Activated CD4-positive, alpha-beta T cell treated with anti-CD3 and anti-CD28 coated beads for 36 hours (primary cell): ENCODE measurements at regions of chr12 and their contacts with region 1.

Region 1: GRCh38 chr12:12786716-12787601 is 1.5 kb downstream of the APOLD1 start:
- DNase-seq: peak; percentile 84
- ATAC-seq: peak; percentile 89
- H3K4me3 Mint-ChIP-seq: peak overlapping the region; percentile 81
- H3K27ac Mint-ChIP-seq: peak overlapping the region; percentile 90
- H3K4me1 Mint-ChIP-seq: peaks cover 28% of the 10 kb centered on the region
- H3K27me3 Mint-ChIP-seq: no peaks in the 10 kb centered on the region

Region 2: GRCh38 chr12:12736759-12737676 is 49.9 kb before region 1 on chr12:
- CTCF ChIA-PET with region 1: interaction called, 14 read pairs
- POLR2A ChIA-PET with region 1: no interaction called
- intact Hi-C with region 1: no loop called
- DNase-seq: peak; percentile 65
- ATAC-seq: peak; percentile 87
- H3K4me3 Mint-ChIP-seq: peak overlapping the region; percentile 32
- H3K27ac Mint-ChIP-seq: peak overlapping the region; percentile 75
- H3K4me1 Mint-ChIP-seq: peaks cover 35% of the 10 kb centered on the region
- H3K27me3 Mint-ChIP-seq: no peaks in the 10 kb centered on the region

Region 3: GRCh38 chr12:12803186-12803585 is 16.2 kb after region 1 on chr12:
- CTCF ChIA-PET with region 1: interaction called, 27 read pairs
- POLR2A ChIA-PET with region 1: no interaction called
- intact Hi-C with region 1: loop called in 1 of 2 experiments (anchors 1 kb)
- DNase-seq: peak; percentile 53
- ATAC-seq: peak; percentile 82
- H3K4me3 Mint-ChIP-seq: no peak overlapping the region
- H3K27ac Mint-ChIP-seq: peak overlapping the region; percentile 61
- H3K4me1 Mint-ChIP-seq: peaks cover 48% of the 10 kb centered on the region
- H3K27me3 Mint-ChIP-seq: no peaks in the 10 kb centered on the region

Region 4: GRCh38 chr12:12837025-12837872 is 50.3 kb after region 1 on chr12:
- CTCF ChIA-PET with region 1: interaction called, 9 read pairs
- POLR2A ChIA-PET with region 1: interaction called, 4 read pairs
- intact Hi-C with region 1: loop called (anchors 2 to 5 kb)
- DNase-seq: peak; percentile 76
- ATAC-seq: peak; percentile 95
- H3K4me3 Mint-ChIP-seq: no peak overlapping the region
- H3K27ac Mint-ChIP-seq: peak overlapping the region; percentile 77
- H3K4me1 Mint-ChIP-seq: peaks cover 44% of the 10 kb centered on the region
- H3K27me3 Mint-ChIP-seq: no peaks in the 10 kb centered on the region

Region 5: DNA sequence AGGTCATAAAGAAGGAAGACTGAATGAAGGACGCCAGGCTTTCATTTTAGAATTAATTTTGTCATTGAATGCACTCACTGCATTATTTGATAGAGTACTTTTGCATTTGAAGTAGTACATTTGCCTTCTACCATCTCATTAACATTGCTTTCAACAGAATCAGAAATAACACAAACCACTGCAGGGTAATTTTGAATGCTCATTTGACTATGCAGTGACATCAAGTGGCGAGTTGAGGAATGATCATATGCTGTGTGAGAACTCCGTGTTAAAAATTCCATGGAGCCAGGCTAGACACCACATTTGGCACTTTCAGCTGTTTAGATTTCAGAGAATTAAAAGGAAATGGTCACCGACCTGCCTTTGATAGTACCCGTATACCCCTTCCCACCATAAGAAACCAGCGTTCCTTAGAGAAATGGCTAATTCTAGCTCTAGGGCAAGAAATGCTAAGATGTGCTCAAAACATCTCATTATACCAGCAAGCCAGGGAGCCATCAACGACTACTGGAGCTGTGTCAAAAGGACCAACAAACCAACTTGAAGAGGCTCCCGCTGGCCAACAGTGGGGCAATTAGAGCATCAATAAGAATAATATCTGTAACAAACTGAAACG is 196.6 kb after region 1 on chr12:
- CTCF ChIA-PET with region 1: interaction called, 15 read pairs
- POLR2A ChIA-PET with region 1: no interaction called
- intact Hi-C with region 1: loop called (anchors 1 to 5 kb)
- DNase-seq: peak; percentile 16
- ATAC-seq: no peak
- H3K4me3 Mint-ChIP-seq: no peak overlapping the region
- H3K27ac Mint-ChIP-seq: no peak overlapping the region
- H3K4me1 Mint-ChIP-seq: no peaks in the 10 kb centered on the region
- H3K27me3 Mint-ChIP-seq: no peaks in the 10 kb centered on the region

Region 6: GRCh38 chr12:13094347-13094746 is 307.4 kb after region 1 on chr12:
- CTCF ChIA-PET with region 1: no interaction called
- POLR2A ChIA-PET with region 1: no interaction called
- intact Hi-C with region 1: loop called in 1 of 2 experiments (anchors 1 kb)
- DNase-seq: no peak
- ATAC-seq: no peak
- H3K4me3 Mint-ChIP-seq: no peak overlapping the region
- H3K27ac Mint-ChIP-seq: no peak overlapping the region
- H3K4me1 Mint-ChIP-seq: peaks cover 26% of the 10 kb centered on the region
- H3K27me3 Mint-ChIP-seq: no peaks in the 10 kb centered on the region

Region 7: DNA sequence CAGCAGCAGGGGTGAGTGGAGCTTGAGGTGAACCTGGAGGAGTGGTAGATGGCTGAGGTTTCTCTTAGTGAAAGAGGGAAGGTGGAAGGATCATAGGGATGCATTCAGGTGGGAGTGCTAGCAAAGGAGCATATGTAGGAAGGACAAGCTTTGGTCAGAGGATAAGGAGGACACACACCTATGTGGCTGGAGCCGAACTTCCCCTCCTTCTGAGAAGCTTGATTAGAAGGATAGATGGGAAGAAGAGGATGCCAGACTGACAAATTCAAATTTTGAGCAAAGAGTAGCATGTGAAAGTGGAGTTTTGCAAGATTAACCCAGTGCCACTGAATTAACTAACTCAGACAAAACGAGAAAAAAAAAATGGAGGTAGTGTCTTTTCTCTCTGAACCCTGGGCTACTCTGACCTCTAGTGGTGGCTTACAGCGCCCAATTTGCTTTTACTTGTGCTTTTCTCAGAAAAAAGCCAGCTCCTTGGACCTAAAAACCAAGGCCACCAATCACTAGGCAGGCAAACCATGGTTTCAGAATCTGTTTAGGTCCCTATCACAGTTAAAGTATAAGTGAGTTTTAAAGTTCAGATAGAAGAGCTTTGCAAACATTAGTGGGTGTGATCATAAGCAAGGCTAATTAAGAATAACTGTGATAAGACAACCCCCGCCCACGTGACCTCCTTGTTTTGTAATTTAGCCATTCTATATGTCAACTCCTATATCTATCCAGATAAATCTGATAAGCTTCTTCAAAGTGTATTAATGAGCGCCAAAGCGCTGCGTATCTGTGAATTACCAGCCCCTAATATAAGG is 425.1 kb after region 1 on chr12:
- CTCF ChIA-PET with region 1: interaction called, 3 read pairs
- POLR2A ChIA-PET with region 1: no interaction called
- intact Hi-C with region 1: loop called (anchors 5 kb)
- DNase-seq: peak; percentile 84
- ATAC-seq: peak; percentile 59
- H3K4me3 Mint-ChIP-seq: no peak overlapping the region
- H3K27ac Mint-ChIP-seq: peak overlapping the region; percentile 49
- H3K4me1 Mint-ChIP-seq: peaks cover 29% of the 10 kb centered on the region
- H3K27me3 Mint-ChIP-seq: no peaks in the 10 kb centered on the region